Ovary (tissue), 10 donors: ENCODE measurements at regions of chr14 and their contacts with region 1.

Region 1: GRCh38 chr14:28751467-28752058 is 15.0 kb upstream of the FOXG1 start:
- DNase-seq: no peak
- H3K4me3 ChIP-seq: no peak overlapping the region
- H3K27ac ChIP-seq: no peak overlapping the region
- H3K4me1 ChIP-seq: no peaks in the 10 kb centered on the region
- H3K27me3 ChIP-seq: no peaks in the 10 kb centered on the region
- CTCF ChIP-seq: no peak
- EP300 ChIP-seq: no peak
- POLR2A ChIP-seq: no peak

Region 2: GRCh38 chr14:28709571-28710257 is 41.8 kb before region 1 on chr14:
- intact Hi-C with region 1: no loop called
- DNase-seq: no peak
- H3K4me3 ChIP-seq: no peak overlapping the region
- H3K27ac ChIP-seq: no peak overlapping the region
- H3K4me1 ChIP-seq: no peaks in the 10 kb centered on the region
- H3K27me3 ChIP-seq: no peaks in the 10 kb centered on the region
- CTCF ChIP-seq: no peak
- EP300 ChIP-seq: no peak
- POLR2A ChIP-seq: no peak

Region 3: GRCh38 chr14:29016050-29016900 is 264.7 kb after region 1 on chr14:
- intact Hi-C with region 1: no loop called
- DNase-seq: peak in 3 of 5 donors; percentile 9 to 39 (median 22)
- H3K4me3 ChIP-seq: no peak overlapping the region
- H3K27ac ChIP-seq: no peak overlapping the region
- H3K4me1 ChIP-seq: no peaks in the 10 kb centered on the region
- H3K27me3 ChIP-seq: no peaks in the 10 kb centered on the region
- CTCF ChIP-seq: peak in 1 of 3 donors; percentile 11
- EP300 ChIP-seq: no peak
- POLR2A ChIP-seq: no peak

Region 4: GRCh38 chr14:29536886-29537511 is 785.4 kb after region 1 on chr14:
- intact Hi-C with region 1: loop called in 2 of 4 experiments (anchors 10 kb)
- DNase-seq: no peak
- H3K4me3 ChIP-seq: no peak overlapping the region
- H3K27ac ChIP-seq: no peak overlapping the region
- H3K4me1 ChIP-seq: no peaks in the 10 kb centered on the region
- H3K27me3 ChIP-seq: no peaks in the 10 kb centered on the region
- CTCF ChIP-seq: no peak
- EP300 ChIP-seq: no peak
- POLR2A ChIP-seq: no peak

Region 5: GRCh38 chr14:30214461-30215090 is 1463.0 kb after region 1 on chr14:
- intact Hi-C with region 1: loop called in 2 of 4 experiments (anchors 10 kb)
- DNase-seq: no peak
- H3K4me3 ChIP-seq: no peak overlapping the region
- H3K27ac ChIP-seq: no peak overlapping the region
- H3K4me1 ChIP-seq: no peaks in the 10 kb centered on the region
- H3K27me3 ChIP-seq: no peaks in the 10 kb centered on the region
- CTCF ChIP-seq: peak in 2 of 3 donors; percentile 46 to 50
- EP300 ChIP-seq: no peak
- POLR2A ChIP-seq: no peak